Activated T-helper 2 cell treated with anti-CD3 and anti-CD28 coated beads, Interferon-gamma antibody, Interleukin-2, Interleukin-4, amounts not matched to agents 10 μg/mL and 5 μg/mL and 100 μg/mL, durations not matched to agents 14 hours and 24 hours and 36 hours (primary cell): ENCODE measurements at regions of chr6 and their contacts with region 1.

Region 1: GRCh38 chr6:130843575-130844320 is 16.5 kb downstream of the SMLR1 start:
- DNase-seq: no peak
- H3K4me3 Mint-ChIP-seq: no peak overlapping the region
- H3K27ac Mint-ChIP-seq: no peak overlapping the region
- H3K4me1 Mint-ChIP-seq: peaks cover 2% of the 10 kb centered on the region
- H3K27me3 Mint-ChIP-seq: no peaks in the 10 kb centered on the region

Region 2: DNA sequence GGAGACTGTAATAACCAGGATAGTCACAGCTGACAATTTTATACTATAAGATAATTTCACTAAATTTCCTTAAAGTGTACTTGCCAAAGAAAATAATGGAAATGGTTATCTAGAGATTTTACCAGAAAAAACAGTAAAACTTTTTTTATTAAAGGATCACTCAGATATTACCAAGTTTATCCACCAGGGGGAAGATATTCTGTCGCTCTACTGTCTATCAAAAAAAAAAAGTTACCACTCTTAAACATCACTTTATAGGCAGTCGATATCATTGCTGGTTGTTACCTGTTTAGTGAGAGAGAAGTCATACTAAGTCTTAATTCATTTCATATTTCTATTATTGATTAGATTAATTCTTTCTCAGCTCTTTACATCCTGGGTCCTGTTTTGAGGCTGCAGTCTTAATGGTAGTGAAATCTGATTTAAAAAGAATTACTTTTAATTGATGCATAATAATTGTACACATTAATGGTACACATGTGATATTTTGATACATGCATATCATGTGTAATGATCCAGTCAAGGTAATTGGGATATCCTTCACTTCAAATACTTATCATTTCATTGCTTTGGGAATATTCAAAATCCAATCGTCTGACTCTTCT is 806.4 kb before region 1 on chr6:
- intact Hi-C with region 1: loop called (anchors 10 kb)
- DNase-seq: no peak
- H3K4me3 Mint-ChIP-seq: no peak overlapping the region
- H3K27ac Mint-ChIP-seq: no peak overlapping the region
- H3K4me1 Mint-ChIP-seq: peaks cover 34% of the 10 kb centered on the region
- H3K27me3 Mint-ChIP-seq: no peaks in the 10 kb centered on the region

Region 3: DNA sequence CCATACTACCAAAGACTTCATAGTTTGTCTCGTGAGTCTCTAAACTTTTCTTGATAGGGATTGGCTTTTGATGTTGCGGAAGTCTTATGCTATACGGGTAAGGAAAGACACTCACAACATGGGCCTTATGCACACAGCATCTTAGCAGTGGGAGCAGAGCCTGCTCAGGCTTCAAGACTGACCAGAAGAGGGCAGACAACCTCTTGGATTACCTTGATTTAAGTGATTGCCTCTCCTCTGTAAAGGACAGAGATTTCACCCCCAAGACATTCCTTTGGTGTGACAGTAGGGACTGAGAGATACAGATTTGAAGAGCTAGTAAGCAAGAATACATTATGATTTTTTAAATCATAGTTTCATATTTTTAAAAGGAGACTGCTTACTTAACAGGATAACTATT is 549.9 kb before region 1 on chr6:
- intact Hi-C with region 1: loop called (anchors 1 kb)
- DNase-seq: peak; percentile 20
- H3K4me3 Mint-ChIP-seq: no peak overlapping the region
- H3K27ac Mint-ChIP-seq: no peak overlapping the region
- H3K4me1 Mint-ChIP-seq: no peaks in the 10 kb centered on the region
- H3K27me3 Mint-ChIP-seq: peaks cover 16% of the 10 kb centered on the region